Activated CD4-positive, alpha-beta T cell treated with anti-CD3 and anti-CD28 coated beads for 36 hours (primary cell): ENCODE measurements at regions of chr6 and their contacts with region 1.

Region 1: GRCh38 chr6:20534295-20535262 is at the start of gene CDKAL1:
- DNase-seq: peak; percentile 94
- ATAC-seq: peak; percentile 89
- H3K4me3 Mint-ChIP-seq: peak within 1 kb of the TSS; percentile 94
- H3K27ac Mint-ChIP-seq: peak within 1 kb of the TSS; percentile 97
- H3K4me1 Mint-ChIP-seq: peaks cover 36% of the 10 kb centered on the region
- H3K27me3 Mint-ChIP-seq: no peaks in the 10 kb centered on the region
- total RNA-seq, gene CDKAL1: 22.1 to 23.4 TPM

Region 2: GRCh38 chr6:20092071-20092566 is 442.5 kb before region 1 on chr6:
- CTCF ChIA-PET with region 1: interaction called, 4 read pairs
- POLR2A ChIA-PET with region 1: no interaction called
- intact Hi-C with region 1: loop called in 1 of 2 experiments (anchors 1 kb)
- DNase-seq: no peak
- ATAC-seq: peak; percentile 23
- H3K4me3 Mint-ChIP-seq: no peak overlapping the region
- H3K27ac Mint-ChIP-seq: no peak overlapping the region
- H3K4me1 Mint-ChIP-seq: no peaks in the 10 kb centered on the region
- H3K27me3 Mint-ChIP-seq: no peaks in the 10 kb centered on the region

Region 3: DNA sequence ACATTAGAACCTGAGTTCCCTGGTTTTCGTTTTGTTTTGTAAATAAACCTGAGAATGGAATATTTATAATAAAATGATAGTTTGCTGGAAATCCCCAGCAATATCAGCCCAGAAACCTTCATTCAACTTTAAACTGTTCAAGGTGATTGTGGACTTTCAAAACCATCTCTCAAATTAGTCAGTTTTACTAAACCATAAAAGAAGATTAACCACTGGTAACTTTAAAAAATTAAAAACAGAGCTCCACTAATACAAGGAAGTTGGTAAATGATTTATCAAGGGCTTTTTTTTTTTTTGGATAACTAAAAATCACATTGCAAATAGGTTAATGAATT is 332.3 kb before region 1 on chr6:
- CTCF ChIA-PET with region 1: no interaction called
- POLR2A ChIA-PET with region 1: no interaction called
- intact Hi-C with region 1: loop called in 1 of 2 experiments (anchors 2 kb)
- DNase-seq: no peak
- ATAC-seq: no peak
- H3K4me3 Mint-ChIP-seq: no peak overlapping the region
- H3K27ac Mint-ChIP-seq: no peak overlapping the region
- H3K4me1 Mint-ChIP-seq: peaks cover 59% of the 10 kb centered on the region
- H3K27me3 Mint-ChIP-seq: no peaks in the 10 kb centered on the region

Region 4: DNA sequence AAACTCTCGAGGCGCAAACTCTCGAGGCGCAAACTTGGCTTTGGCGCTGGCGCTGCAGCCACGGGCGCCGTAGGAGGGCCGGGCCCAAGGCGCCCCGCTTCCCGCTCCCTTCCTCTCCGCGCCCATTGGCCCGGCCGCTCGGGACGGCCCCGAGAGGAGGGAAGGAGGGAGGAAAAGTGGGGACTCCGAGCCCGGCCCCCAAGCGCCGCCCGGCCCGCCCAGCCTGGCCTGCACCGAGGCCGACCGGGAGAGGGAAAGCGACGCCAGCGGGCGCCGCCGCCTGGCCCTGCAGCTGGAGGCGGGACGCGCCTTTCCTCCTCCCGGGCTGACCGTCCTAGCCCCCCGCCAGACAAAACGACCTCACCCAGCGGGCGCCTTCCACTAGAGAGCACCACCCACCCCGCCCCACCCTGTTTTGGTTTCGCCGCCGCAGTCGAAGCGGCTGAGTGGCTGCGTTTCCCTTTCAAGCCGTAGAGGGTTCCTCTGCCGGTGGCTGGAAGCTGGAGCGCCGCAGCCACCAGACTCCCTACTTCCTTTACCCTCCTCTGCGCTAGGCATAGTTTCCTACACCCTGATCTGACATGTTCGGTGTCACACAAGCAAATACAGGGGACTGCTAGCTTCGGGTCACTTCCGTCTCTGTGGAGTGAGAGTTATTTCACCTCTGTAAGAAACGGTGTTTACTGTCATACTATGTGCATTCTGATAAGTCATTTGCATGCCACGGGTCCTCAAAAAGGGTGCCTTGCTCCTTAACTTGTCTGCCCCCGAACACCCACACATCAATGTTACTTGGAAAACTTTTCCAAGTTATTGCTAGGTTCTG is 322.0 kb before region 1 on chr6 and contains the start of gene MBOAT1:
- CTCF ChIA-PET with region 1: interaction called, 3 read pairs
- POLR2A ChIA-PET with region 1: no interaction called
- intact Hi-C with region 1: loop called (anchors 1 to 5 kb)
- DNase-seq: peak; percentile 85
- ATAC-seq: peak; percentile 89
- H3K4me3 Mint-ChIP-seq: peak within 1 kb of the TSS; percentile 95
- H3K27ac Mint-ChIP-seq: peak within 1 kb of the TSS; percentile 97
- H3K4me1 Mint-ChIP-seq: peaks cover 37% of the 10 kb centered on the region
- H3K27me3 Mint-ChIP-seq: no peaks in the 10 kb centered on the region
- total RNA-seq, gene MBOAT1: 13.3 to 16.1 TPM

Region 5: DNA sequence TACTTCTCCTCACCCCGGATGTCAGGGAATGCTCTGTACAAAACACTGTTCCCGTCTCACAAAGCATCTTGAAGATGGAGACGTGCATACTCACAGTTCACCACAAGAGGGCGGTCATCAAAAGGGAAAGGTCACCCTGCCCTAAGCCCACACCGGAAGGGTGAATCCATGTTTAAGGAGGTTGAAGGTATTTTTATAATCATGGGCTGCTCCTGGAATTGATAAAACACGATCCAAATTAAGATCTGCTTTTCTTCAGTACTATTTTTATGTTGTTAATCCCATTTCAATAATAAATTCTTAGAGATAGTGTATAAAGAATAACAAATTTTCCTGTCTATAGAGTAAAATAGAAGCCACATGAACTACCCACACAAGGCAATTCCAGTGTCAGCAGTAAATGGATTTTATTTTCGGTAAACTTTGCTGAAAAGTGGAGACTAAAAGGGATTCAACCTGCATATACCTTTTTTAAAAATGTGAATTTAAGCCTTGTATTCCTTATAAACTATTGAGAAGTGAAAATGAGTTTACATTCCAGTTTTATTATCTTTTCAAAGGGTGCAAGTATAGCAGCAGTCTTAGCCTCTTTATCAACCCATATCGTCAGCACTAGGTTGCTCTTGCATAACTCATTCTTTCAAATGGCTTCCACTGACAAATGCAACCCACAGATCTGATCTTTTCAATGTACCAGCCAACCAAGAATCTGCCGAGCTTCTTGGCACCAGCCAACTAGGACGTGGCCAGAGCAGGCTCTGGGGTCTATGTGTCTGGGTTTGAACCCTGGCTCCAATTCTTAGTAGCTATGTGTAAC is 242.6 kb before region 1 on chr6:
- CTCF ChIA-PET with region 1: interaction called, 23 read pairs
- POLR2A ChIA-PET with region 1: no interaction called
- intact Hi-C with region 1: no loop called
- DNase-seq: peak; percentile 87
- ATAC-seq: peak; percentile 90
- H3K4me3 Mint-ChIP-seq: peak overlapping the region; percentile 16
- H3K27ac Mint-ChIP-seq: peak overlapping the region; percentile 8
- H3K4me1 Mint-ChIP-seq: peaks cover 21% of the 10 kb centered on the region
- H3K27me3 Mint-ChIP-seq: no peaks in the 10 kb centered on the region

Region 6: DNA sequence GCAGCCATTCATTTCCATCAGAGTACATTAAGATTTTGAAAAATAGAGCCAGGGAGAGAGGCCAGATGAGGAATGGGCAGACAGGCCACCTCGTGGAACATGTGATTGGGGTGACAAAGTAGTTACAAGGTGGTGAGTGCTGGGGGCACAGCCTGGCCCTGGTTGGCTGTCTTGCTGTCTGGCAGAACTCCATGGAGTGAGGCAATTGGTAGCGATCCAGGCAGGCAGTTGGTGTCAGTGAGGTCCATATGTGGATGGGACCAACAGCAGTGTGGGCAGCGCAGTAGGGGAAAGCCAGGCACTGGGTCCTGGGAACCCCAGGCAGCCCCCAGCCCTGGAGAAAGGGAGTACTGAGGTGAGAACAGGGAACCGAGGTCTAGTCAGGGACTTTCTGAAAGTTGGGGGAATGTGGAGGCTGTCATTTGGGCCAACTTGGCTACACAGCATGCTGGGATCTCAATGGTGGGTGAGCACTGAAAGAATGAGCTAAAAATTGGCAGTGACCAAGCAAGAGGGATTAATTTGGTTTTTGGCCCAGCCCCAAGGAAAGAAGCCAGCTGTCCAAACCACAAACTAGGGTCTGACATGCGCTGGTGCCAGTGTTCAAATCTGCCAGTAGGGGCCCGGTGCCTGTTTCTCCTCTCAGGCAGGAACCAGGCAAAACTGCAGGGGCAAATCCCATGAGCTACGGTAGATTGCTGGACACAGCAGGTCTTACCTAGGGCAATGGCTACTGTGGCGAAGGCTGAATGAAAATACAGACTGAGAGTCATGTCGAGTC is 194.3 kb before region 1 on chr6:
- CTCF ChIA-PET with region 1: no interaction called
- POLR2A ChIA-PET with region 1: no interaction called
- intact Hi-C with region 1: no loop called
- DNase-seq: no peak
- ATAC-seq: no peak
- H3K4me3 Mint-ChIP-seq: no peak overlapping the region
- H3K27ac Mint-ChIP-seq: no peak overlapping the region
- H3K4me1 Mint-ChIP-seq: peaks cover 20% of the 10 kb centered on the region
- H3K27me3 Mint-ChIP-seq: no peaks in the 10 kb centered on the region

Region 7: DNA sequence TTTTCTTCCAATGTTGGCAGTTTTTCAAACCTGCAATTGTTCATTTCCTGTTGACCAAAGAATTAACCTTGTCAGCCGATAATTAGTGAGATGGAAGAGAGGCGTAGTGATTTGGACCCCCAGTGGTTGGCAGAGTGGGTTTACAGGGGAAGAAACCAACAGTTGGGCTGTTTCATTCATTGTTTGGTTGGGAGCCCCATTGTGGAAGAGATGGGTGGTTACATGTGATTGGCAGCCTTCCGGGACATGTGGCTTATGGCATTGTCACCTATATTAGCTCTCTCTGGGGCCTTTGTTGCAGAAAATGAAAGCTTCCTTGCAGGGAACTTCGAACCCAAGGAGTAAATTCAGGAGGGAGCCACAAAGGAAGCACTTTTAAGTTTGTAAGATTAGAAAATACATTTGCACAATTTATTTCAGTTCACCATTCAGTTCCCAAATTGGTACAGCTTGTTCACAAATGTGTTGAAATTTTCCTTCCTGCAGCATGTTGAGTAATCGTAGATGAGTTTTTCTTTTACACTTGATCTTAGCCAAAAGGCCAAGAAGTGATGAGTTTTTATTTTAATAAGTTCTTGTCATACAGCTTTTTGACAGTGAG is 50.6 kb before region 1 on chr6:
- CTCF ChIA-PET with region 1: no interaction called
- POLR2A ChIA-PET with region 1: no interaction called
- intact Hi-C with region 1: no loop called
- DNase-seq: no peak
- ATAC-seq: no peak
- H3K4me3 Mint-ChIP-seq: no peak overlapping the region
- H3K27ac Mint-ChIP-seq: no peak overlapping the region
- H3K4me1 Mint-ChIP-seq: peaks cover 7% of the 10 kb centered on the region
- H3K27me3 Mint-ChIP-seq: no peaks in the 10 kb centered on the region

Region 8: DNA sequence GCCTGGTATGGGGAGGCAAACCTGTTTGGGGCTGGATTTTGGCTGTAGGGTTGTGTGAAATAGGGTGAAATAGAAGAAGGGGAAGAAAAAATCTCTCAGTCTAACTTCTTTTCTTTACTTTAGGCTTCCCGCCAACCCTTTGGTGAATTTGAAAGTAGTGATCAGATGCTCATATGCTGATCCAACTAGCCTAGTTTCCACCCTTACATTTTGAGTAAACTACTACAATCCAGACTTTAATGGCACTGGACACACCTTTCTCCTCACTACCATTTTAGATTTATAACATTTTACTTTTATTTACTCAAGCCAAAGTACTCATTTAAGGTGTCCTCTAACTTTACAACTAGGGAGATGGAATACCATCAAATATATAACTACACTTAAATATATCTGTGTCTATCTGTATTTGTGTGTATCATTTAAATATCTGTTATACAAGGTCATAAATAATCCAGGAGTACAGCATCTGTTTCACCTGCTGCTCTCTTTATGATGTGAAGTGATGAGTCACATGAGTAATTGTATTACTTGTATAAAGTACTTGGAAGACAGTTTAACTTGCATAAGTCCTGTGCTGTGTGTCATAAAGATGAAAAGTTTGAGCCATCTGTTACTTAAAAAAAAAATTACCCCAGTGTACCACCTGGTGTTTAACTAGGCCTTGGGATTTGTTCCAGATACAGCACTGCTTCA is 171.8 kb after region 1 on chr6:
- CTCF ChIA-PET with region 1: no interaction called
- POLR2A ChIA-PET with region 1: no interaction called
- intact Hi-C with region 1: no loop called
- DNase-seq: no peak
- ATAC-seq: peak; percentile 75
- H3K4me3 Mint-ChIP-seq: no peak overlapping the region
- H3K27ac Mint-ChIP-seq: no peak overlapping the region
- H3K4me1 Mint-ChIP-seq: peaks cover 64% of the 10 kb centered on the region
- H3K27me3 Mint-ChIP-seq: no peaks in the 10 kb centered on the region